H1 (cell line): ENCODE measurements at regions of chr15 and their contacts with region 1.

Region 1: DNA sequence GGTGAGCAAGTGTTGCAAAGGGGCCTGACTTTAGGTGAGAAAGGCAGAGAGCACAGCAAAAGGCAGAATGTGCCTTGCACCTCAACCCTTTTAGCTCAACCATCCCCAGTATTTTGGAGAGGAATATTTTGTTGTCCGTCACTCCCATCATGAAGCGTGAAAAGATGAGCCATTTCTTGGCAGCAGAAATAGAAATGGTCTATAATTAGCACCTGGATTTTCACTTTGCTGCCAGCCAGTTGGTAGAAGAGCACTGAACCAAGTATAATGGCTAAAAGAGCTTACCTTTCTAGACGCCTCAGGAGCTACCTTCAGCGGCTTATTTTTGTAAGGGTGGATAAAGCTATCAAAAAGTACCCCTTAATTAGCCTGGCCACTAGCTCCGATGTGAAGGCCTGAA is 406.7 kb downstream of the OCA2 start:
- DNase-seq: no peak
- H3K4me3 ChIP-seq: no peak overlapping the region
- H3K27ac ChIP-seq: no peak overlapping the region
- H3K4me1 ChIP-seq: peaks cover 0 to 5% (median 3%) of the 10 kb centered on the region in 4 experiments; a peak in 2 of 7 replicates
- H3K27me3 ChIP-seq: no peaks in the 10 kb centered on the region
- CTCF ChIP-seq: no peak
- EP300 ChIP-seq: no peak
- POLR2A ChIP-seq: no peak
- RAD21 ChIP-seq: no peak

Region 2: GRCh38 chr15:27679731-27680471 is 12.5 kb before region 1 on chr15:
- CTCF ChIA-PET with region 1: interaction called, 24 read pairs
- POLR2A ChIA-PET with region 1: no interaction called
- DNase-seq: no peak
- H3K4me3 ChIP-seq: peak overlapping the region in 2 of 4 experiments; percentile 2 to 40; a peak in 3 of 8 replicates
- H3K27ac ChIP-seq: no peak overlapping the region
- H3K4me1 ChIP-seq: peaks cover 0 to 15% (median 5%) of the 10 kb centered on the region in 4 experiments; a peak in 6 of 7 replicates
- H3K27me3 ChIP-seq: peaks cover 0 to 9% (median 1%) of the 10 kb centered on the region in 4 experiments; a peak in 3 of 7 replicates
- CTCF ChIP-seq: peak in 1 of 3 experiments; percentile 11; a peak in 1 of 4 replicates
- EP300 ChIP-seq: no peak
- POLR2A ChIP-seq: no peak
- RAD21 ChIP-seq: peak in 1 of 2 experiments; percentile 43; a peak in 2 of 4 replicates